Naive thymus-derived CD8-positive, alpha-beta T cell (primary cell): ENCODE measurements at regions of chr19 and their contacts with region 1.

Region 1: DNA sequence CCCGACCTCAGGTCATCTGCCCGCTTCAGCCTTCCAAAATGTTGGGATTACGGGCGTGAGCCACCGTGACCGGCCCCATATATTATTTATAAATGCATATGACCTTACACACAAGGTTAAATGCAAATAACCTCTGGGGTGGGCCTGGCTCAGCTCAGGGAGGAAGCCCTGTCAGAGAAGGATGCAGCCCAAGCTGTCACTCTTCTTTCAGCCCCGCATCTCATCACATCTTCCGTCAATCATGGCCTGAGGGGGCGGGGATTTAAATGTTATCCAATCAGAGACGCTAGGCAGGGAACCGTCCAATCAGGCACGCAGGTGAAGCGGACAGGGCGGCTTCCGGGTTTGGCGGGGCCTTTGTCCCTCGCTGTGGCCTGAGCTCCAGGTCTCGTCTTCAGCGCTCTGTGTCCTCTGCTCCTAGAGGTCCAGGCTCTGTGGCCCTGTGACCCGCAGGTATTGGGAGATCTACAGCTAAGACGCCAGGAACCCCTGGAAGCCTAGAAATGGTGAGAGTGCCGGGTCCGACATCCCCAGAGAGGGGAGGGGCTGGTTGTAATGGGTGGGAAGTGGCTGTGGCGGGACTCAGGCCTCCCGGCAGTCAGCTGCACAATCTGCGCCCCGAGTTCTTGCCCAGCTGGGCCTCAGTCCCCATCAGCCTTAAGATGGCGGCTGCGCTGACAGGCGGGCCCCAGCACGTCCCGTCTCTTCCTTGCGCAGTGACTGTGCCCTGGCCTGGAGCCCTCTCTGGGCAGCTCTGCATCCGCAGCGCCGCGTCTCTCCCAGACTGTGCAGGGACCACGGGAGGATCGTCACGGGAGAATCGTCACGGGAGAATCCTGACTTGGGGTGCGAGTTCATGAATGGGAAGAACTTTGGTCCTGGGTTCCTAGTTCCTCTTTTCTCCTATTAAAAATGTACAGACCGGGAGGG is at the start of gene ZNF430:
- DNase-seq: peak; percentile 76 to 98 (median 94)
- ATAC-seq: peak; percentile 95 to 97
- H3K4me3 Mint-ChIP-seq: peak within 1 kb of the TSS; percentile 95 to 100 (median 100)
- H3K27ac Mint-ChIP-seq: peak within 1 kb of the TSS; percentile 100
- H3K4me1 Mint-ChIP-seq: peaks cover 17 to 54% (median 50%) of the 10 kb centered on the region in 4 donors
- H3K27me3 Mint-ChIP-seq: no peaks in the 10 kb centered on the region
- polyA plus RNA-seq, gene ZNF430: 48.7 to 55.7 (median 53.9) TPM

Region 2: GRCh38 chr19:20923077-20923871 is 97.3 kb before region 1 on chr19 and contains the start of gene ZNF85:
- POLR2A ChIA-PET with region 1: interaction called, 13 read pairs
- DNase-seq: peak; percentile 78 to 95 (median 90)
- ATAC-seq: peak; percentile 99
- H3K4me3 Mint-ChIP-seq: peak within 1 kb of the TSS; percentile 95 to 98 (median 96)
- H3K27ac Mint-ChIP-seq: peak within 1 kb of the TSS; percentile 86 to 98 (median 94)
- H3K4me1 Mint-ChIP-seq: peaks cover 4 to 26% (median 14%) of the 10 kb centered on the region in 4 donors
- H3K27me3 Mint-ChIP-seq: no peaks in the 10 kb centered on the region
- polyA plus RNA-seq, gene ZNF85: 5.8 to 11.1 (median 6.4) TPM

Region 3: DNA sequence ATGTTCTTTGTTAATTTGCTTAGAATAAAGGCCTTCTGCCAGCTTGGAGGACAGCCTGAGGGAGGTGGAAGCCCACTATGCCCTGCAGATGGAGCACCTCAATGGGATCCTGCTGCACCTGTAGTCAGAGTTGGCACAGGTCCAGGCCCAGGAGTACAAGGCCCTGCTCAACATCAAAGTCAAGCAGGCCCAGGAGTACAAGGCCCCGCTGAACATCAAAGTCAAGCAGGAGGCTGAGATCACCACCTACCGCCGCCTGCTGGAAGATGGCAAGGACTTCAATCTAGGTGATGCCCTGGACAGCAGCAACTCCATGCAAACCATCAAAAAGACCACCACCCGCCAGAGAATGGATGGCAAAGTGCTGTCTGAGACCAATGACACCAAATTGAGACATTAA is 55.8 kb before region 1 on chr19:
- POLR2A ChIA-PET with region 1: no interaction called
- DNase-seq: peak in 2 of 10 donors; percentile 2 to 3
- ATAC-seq: no peak
- H3K4me3 Mint-ChIP-seq: no peak overlapping the region
- H3K27ac Mint-ChIP-seq: no peak overlapping the region
- H3K4me1 Mint-ChIP-seq: no peaks in the 10 kb centered on the region
- H3K27me3 Mint-ChIP-seq: peaks cover 0 to 9% (median 1%) of the 10 kb centered on the region in 5 donors

Region 4: GRCh38 chr19:20999731-21000352 is 20.7 kb before region 1 on chr19:
- POLR2A ChIA-PET with region 1: interaction called, 14 read pairs
- DNase-seq: peak; percentile 71 to 93 (median 86)
- ATAC-seq: peak; percentile 100
- H3K4me3 Mint-ChIP-seq: peak overlapping the region; percentile 81 to 92 (median 88)
- H3K27ac Mint-ChIP-seq: peak overlapping the region in 7 of 10 donors; percentile 17 to 80 (median 65)
- H3K4me1 Mint-ChIP-seq: peaks cover 4 to 13% (median 5%) of the 10 kb centered on the region in 4 donors
- H3K27me3 Mint-ChIP-seq: no peaks in the 10 kb centered on the region

Region 5: GRCh38 chr19:21141787-21142464 is 121.4 kb after region 1 on chr19 and contains the start of gene ZNF431:
- POLR2A ChIA-PET with region 1: interaction called, 19 read pairs
- DNase-seq: peak; percentile 74 to 95 (median 88)
- ATAC-seq: peak; percentile 99
- H3K4me3 Mint-ChIP-seq: peak within 1 kb of the TSS; percentile 96 to 99 (median 98)
- H3K27ac Mint-ChIP-seq: peak within 1 kb of the TSS; percentile 95 to 99 (median 97)
- H3K4me1 Mint-ChIP-seq: peaks cover 16 to 47% (median 45%) of the 10 kb centered on the region in 4 donors
- H3K27me3 Mint-ChIP-seq: no peaks in the 10 kb centered on the region
- polyA plus RNA-seq, gene ZNF431: 9.8 to 15.4 (median 13.9) TPM